Activated CD4-positive, alpha-beta memory T cell treated with anti-CD3 and anti-CD28 coated beads for 36 hours (primary cell): ENCODE measurements at regions of chr5 and their contacts with region 1.

Region 1: GRCh38 chr5:14644623-14645237 is 19.8 kb upstream of the OTULIN start:
- DNase-seq: no peak
- H3K4me3 Mint-ChIP-seq: no peak overlapping the region
- H3K27ac Mint-ChIP-seq: no peak overlapping the region
- H3K4me1 Mint-ChIP-seq: no peaks in the 10 kb centered on the region
- H3K27me3 Mint-ChIP-seq: peaks cover 17% of the 10 kb centered on the region

Region 2: DNA sequence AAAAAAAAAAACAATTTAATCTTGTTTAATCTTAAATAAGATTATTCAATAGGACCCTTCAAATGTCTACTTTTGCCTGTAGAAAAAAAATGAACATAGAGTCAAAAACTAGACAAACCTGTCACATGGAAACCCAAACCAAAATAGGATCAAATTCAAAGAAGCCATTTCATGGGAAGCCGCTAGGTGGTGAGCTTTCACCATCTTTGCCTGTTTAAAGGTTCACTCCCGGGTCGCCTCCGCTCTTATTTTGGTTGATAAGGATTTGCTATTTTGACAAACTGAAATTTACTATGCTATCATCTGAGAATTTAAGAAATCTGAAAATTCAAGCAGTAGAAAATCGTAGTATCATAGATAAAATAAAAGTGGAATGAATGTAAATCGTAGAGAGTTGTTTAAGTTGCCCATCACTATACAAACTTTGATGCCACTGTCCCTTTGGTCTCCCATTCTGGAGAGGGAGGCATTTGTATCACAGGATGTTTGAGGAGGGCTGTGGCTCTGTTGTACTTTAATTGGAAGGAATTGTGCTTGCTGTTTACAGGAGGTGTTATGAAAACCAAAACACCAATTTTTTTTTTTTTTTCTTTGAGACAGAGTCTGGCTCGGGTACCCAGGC is 656.8 kb before region 1 on chr5:
- CTCF ChIA-PET with region 1: interaction called, 3 read pairs
- POLR2A ChIA-PET with region 1: no interaction called
- intact Hi-C with region 1: loop called (anchors 10 kb)
- DNase-seq: peak; percentile 43
- H3K4me3 Mint-ChIP-seq: no peak overlapping the region
- H3K27ac Mint-ChIP-seq: no peak overlapping the region
- H3K4me1 Mint-ChIP-seq: no peaks in the 10 kb centered on the region
- H3K27me3 Mint-ChIP-seq: no peaks in the 10 kb centered on the region

Region 3: DNA sequence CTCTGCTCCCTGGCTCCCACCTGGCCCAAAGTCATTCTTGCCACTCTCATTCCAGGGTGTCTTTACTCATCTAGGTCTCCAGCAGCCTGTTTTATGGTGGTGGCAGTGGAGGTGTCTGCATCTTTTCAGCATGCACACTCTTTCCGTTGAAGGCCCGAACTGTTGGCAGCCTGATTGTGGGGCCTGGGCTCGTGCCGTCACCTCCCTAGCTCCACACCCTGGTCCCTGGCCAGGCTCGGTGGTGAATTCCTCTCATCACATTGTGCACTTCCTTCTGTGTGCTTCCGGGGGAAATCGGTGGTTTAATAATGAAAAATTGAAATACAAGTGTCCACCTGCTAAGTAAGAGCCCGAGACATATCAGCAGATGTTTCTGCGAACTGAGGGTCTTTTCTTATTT is 287.3 kb before region 1 on chr5:
- CTCF ChIA-PET with region 1: interaction called, 138 read pairs
- POLR2A ChIA-PET with region 1: no interaction called
- intact Hi-C with region 1: loop called (anchors 1 kb)
- DNase-seq: no peak
- H3K4me3 Mint-ChIP-seq: no peak overlapping the region
- H3K27ac Mint-ChIP-seq: no peak overlapping the region
- H3K4me1 Mint-ChIP-seq: no peaks in the 10 kb centered on the region
- H3K27me3 Mint-ChIP-seq: peaks cover 2% of the 10 kb centered on the region

Region 4: GRCh38 chr5:14374100-14374499 is 270.6 kb before region 1 on chr5:
- CTCF ChIA-PET with region 1: interaction called, 138 read pairs
- POLR2A ChIA-PET with region 1: no interaction called
- intact Hi-C with region 1: no loop called
- DNase-seq: no peak
- H3K4me3 Mint-ChIP-seq: no peak overlapping the region
- H3K27ac Mint-ChIP-seq: no peak overlapping the region
- H3K4me1 Mint-ChIP-seq: no peaks in the 10 kb centered on the region
- H3K27me3 Mint-ChIP-seq: no peaks in the 10 kb centered on the region

Region 5: GRCh38 chr5:14399054-14399692 is 245.6 kb before region 1 on chr5:
- CTCF ChIA-PET with region 1: interaction called, 80 read pairs
- POLR2A ChIA-PET with region 1: interaction called, 3 read pairs
- intact Hi-C with region 1: loop called (anchors 1 kb)
- DNase-seq: no peak
- H3K4me3 Mint-ChIP-seq: no peak overlapping the region
- H3K27ac Mint-ChIP-seq: no peak overlapping the region
- H3K4me1 Mint-ChIP-seq: peaks cover 13% of the 10 kb centered on the region
- H3K27me3 Mint-ChIP-seq: no peaks in the 10 kb centered on the region

Region 6: DNA sequence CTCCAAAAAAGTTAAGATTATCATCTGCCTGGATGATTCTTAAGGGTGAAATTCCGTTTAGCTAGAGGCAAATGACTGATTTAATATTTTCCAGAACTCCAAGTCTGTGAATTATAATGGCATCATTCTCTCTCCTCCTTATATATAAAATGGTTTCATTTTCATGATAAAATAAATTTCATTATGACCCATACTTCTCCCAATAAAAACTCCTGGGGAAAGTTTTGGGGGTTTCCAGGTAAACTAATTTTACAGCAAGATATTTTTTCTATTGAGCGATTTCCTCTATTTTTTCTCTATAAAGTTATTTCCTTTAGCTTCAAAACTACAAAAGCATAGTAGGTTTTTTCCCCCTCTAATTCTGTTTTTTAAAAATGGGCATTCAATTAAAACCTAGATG is 12.2 kb after region 1 on chr5:
- CTCF ChIA-PET with region 1: interaction called, 17 read pairs
- POLR2A ChIA-PET with region 1: no interaction called
- intact Hi-C with region 1: no loop called
- DNase-seq: no peak
- H3K4me3 Mint-ChIP-seq: no peak overlapping the region
- H3K27ac Mint-ChIP-seq: no peak overlapping the region
- H3K4me1 Mint-ChIP-seq: peaks cover 30% of the 10 kb centered on the region
- H3K27me3 Mint-ChIP-seq: no peaks in the 10 kb centered on the region

Region 7: GRCh38 chr5:14908195-14908594 is 263.5 kb after region 1 on chr5:
- CTCF ChIA-PET with region 1: no interaction called
- POLR2A ChIA-PET with region 1: no interaction called
- intact Hi-C with region 1: no loop called
- DNase-seq: no peak
- H3K4me3 Mint-ChIP-seq: no peak overlapping the region
- H3K27ac Mint-ChIP-seq: no peak overlapping the region
- H3K4me1 Mint-ChIP-seq: no peaks in the 10 kb centered on the region
- H3K27me3 Mint-ChIP-seq: no peaks in the 10 kb centered on the region